ENCODE measurements at regions of chr1 and their contacts with region 1.

Region 1: DNA sequence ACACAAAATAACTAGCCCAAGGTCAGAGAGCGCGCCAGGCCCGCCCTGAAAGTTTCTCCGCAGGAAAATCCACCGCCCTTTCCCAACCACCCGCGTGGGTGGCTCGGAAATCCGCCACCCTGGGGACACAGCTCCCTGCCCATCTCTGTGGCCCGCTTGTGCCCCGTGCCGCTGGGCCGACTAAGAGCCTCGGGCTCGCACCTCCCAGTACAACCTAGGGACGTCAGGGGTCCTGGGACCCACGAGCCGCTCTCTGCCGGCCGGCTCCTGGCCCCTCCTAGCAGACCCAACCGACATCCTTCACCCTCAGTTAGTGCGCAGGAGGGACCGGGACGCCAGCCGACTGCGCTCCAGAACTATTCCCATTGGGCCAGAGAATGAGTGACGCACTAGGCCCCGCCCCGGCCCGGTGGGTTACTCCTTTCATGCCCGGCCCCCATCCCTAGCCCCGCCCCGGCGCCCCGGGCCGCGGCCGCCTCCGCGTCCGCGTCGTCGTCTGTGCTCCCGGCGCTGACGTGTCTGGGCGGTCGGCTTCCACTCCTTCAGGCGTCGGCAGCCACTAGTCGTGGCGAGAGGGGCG is 395 bp upstream of the UAP1 start:
- DNase-seq: peak; percentile 87 to 98
- H3K4me3 ChIP-seq: peak overlapping the region; percentile 70
- H3K27ac ChIP-seq: peak overlapping the region; percentile 54
- H3K4me1 ChIP-seq: peaks cover 17% of the 10 kb centered on the region
- H3K27me3 ChIP-seq: no peaks in the 10 kb centered on the region
- CTCF ChIP-seq: no peak

Region 2: DNA sequence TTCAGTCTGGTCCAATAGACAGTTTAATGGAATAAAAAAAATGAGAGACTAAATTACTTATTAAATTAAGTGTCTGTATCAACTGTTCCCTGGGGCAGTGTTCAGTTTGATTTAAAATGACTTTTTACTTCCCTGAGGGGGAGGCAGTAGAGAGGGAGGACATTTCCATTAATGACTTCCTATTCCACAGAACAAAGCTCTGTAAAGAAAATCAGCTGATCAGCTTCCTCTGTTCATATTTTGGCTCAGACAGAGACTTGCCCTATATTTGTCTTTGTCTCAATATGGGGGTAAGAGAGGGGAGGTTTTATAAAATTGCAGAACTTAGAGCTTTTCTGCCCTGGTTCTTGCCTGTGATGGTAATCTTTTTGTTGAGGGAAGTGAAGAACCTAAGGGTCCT is 1201.8 kb before region 1 on chr1:
- CTCF ChIA-PET with region 1: no interaction called
- POLR2A ChIA-PET with region 1: no interaction called
- intact Hi-C with region 1: no loop called
- DNase-seq: no peak
- H3K4me3 ChIP-seq: no peak overlapping the region
- H3K27ac ChIP-seq: no peak overlapping the region
- H3K4me1 ChIP-seq: no peaks in the 10 kb centered on the region
- H3K27me3 ChIP-seq: no peaks in the 10 kb centered on the region
- CTCF ChIP-seq: no peak

Region 3: DNA sequence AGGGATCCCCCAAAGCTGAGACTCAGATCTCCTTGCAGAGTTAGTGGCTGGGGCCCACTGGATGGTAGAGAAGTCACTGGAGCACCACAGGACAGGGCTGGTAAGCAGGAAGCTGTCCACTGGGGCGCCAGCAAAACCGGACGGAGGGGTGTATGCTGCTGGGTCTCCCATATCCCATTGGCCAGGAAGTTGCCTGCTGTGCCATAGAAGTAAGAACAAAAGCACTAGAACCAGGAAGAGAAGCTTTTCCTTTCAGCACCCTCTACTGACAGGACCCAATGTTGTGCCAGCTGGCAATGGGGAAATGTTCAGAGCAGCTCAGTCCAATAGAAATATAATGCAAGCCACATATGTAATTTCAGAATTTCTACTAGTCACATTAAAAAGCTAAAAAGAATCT is 331.0 kb before region 1 on chr1:
- CTCF ChIA-PET with region 1: no interaction called
- POLR2A ChIA-PET with region 1: no interaction called
- intact Hi-C with region 1: no loop called
- DNase-seq: no peak
- H3K4me3 ChIP-seq: no peak overlapping the region
- H3K27ac ChIP-seq: no peak overlapping the region
- H3K4me1 ChIP-seq: no peaks in the 10 kb centered on the region
- H3K27me3 ChIP-seq: no peaks in the 10 kb centered on the region
- CTCF ChIP-seq: no peak

Region 4: DNA sequence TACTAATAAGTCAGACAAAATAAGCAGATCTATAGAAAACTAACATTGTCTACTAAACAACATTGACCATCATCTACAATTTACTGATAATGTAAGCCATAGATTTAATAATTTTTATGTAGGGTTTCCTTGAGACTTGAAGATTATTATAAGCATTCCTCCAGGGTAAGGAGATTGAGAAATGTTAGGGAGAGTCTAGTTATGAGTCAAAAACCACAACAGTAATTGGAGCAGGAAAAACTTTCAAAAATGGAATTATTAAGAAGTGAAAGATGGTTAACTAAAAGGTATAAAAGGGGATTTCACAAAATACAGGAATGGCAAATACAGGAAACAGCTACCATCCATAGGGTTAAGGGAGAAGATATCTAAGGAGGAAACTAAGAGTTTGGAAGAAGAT is 75.9 kb before region 1 on chr1:
- CTCF ChIA-PET with region 1: no interaction called
- POLR2A ChIA-PET with region 1: interaction called, 10 read pairs
- intact Hi-C with region 1: no loop called
- DNase-seq: no peak
- H3K4me3 ChIP-seq: no peak overlapping the region
- H3K27ac ChIP-seq: no peak overlapping the region
- H3K4me1 ChIP-seq: no peaks in the 10 kb centered on the region
- H3K27me3 ChIP-seq: no peaks in the 10 kb centered on the region
- CTCF ChIP-seq: no peak

Region 5: DNA sequence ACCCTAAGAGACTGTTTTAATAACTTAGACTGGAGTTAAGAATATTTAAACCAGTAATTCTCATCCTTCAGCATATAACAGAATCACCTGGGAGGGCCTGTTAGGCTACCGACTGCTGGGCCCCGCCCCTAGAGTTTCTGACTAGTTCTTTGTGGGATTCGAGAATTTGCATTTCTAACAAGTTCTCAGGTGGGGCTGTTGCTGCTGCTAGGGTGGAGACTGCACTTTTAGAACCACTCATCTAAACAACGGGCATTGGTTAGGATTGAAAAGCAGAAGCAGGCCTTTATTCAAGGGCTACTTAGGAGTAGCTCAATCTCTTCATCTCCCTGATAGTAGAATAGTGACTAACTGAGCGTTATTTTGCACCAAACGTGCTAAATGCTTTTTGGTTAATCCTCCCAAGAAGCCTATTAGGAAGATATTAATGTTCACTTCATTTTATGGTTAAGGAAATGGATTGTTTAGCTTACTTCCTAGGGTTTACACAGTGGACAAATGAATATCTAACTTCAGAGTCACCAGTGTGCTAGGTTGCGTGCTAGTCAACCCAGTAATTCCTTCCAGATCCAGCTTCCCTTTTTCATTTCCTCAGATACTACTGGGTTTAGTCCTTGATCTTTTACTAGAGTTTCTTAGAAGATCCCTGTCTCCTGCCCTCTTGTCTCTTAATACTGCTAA is 30.7 kb before region 1 on chr1:
- CTCF ChIA-PET with region 1: no interaction called
- POLR2A ChIA-PET with region 1: no interaction called
- intact Hi-C with region 1: loop called (anchors 5 kb)
- DNase-seq: no peak
- H3K4me3 ChIP-seq: no peak overlapping the region
- H3K27ac ChIP-seq: no peak overlapping the region
- H3K4me1 ChIP-seq: no peaks in the 10 kb centered on the region
- H3K27me3 ChIP-seq: no peaks in the 10 kb centered on the region
- CTCF ChIP-seq: no peak

Region 6: GRCh38 chr1:162541619-162542141 is 19.4 kb before region 1 on chr1:
- CTCF ChIA-PET with region 1: no interaction called
- POLR2A ChIA-PET with region 1: interaction called, 7 read pairs
- intact Hi-C with region 1: loop called (anchors 1 kb)
- DNase-seq: peak; percentile 52 to 57
- H3K4me3 ChIP-seq: no peak overlapping the region
- H3K27ac ChIP-seq: peak overlapping the region; percentile 54
- H3K4me1 ChIP-seq: peaks cover 28% of the 10 kb centered on the region
- H3K27me3 ChIP-seq: no peaks in the 10 kb centered on the region
- CTCF ChIP-seq: no peak

Measured in PC-9 (cell line).